Sigmoid colon (tissue), 7 donors: ENCODE measurements at regions of chr1 and their contacts with region 1.

Region 1: GRCh38 chr1:45945426-45945825 is 142.0 kb downstream of the MAST2 start:
- DNase-seq: no peak
- H3K4me3 ChIP-seq: no peak overlapping the region
- H3K27ac ChIP-seq: no peak overlapping the region
- H3K4me1 ChIP-seq: peaks cover 0 to 26% (median 21%) of the 10 kb centered on the region in 4 donors
- H3K27me3 ChIP-seq: no peaks in the 10 kb centered on the region
- CTCF ChIP-seq: no peak
- EP300 ChIP-seq: no peak
- POLR2A ChIP-seq: no peak

Region 2: GRCh38 chr1:45876000-45876617 is 69.3 kb before region 1 on chr1:
- intact Hi-C with region 1: no loop called
- DNase-seq: no peak
- H3K4me3 ChIP-seq: no peak overlapping the region
- H3K27ac ChIP-seq: no peak overlapping the region
- H3K4me1 ChIP-seq: peaks cover 0 to 6% (median 1%) of the 10 kb centered on the region in 4 donors
- H3K27me3 ChIP-seq: no peaks in the 10 kb centered on the region
- CTCF ChIP-seq: no peak
- EP300 ChIP-seq: no peak
- POLR2A ChIP-seq: no peak

Region 3: DNA sequence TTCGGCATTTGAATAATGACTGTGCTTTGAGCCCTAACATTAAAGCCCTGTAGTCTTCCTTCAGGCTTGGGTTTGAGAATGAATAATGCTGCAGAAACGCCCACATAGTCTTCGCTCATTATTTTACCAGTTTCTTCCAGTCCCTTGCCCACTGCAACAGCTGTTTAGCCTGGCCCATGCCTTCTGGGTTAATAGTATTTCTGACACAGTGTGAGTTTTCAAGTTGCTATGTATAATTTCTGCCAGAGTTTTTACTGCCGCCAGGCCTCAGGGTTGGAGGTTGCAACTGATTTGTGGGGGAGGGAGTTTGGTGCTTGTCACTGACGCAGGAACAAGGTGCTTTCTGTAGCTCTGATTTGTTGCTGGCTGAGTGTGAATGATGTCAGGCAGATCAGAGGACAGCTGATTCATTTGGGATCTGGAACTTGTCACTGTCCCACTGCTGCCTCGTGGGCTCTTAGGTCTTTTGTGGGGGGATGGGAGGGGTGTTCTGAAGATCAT is 32.2 kb before region 1 on chr1:
- intact Hi-C with region 1: loop called (anchors 5 kb)
- DNase-seq: peak; percentile 89
- H3K4me3 ChIP-seq: peak overlapping the region in 1 of 4 donors; percentile 16
- H3K27ac ChIP-seq: peak overlapping the region; percentile 77 to 82 (median 79)
- H3K4me1 ChIP-seq: peaks cover 0 to 29% (median 27%) of the 10 kb centered on the region in 4 donors
- H3K27me3 ChIP-seq: no peaks in the 10 kb centered on the region
- CTCF ChIP-seq: no peak
- EP300 ChIP-seq: peak; percentile 62 to 92 (median 86)
- POLR2A ChIP-seq: peak in 1 of 2 donors; percentile 31